Ovary (tissue), 10 donors: ENCODE measurements at regions of chr2 and their contacts with region 1.

Region 1: DNA sequence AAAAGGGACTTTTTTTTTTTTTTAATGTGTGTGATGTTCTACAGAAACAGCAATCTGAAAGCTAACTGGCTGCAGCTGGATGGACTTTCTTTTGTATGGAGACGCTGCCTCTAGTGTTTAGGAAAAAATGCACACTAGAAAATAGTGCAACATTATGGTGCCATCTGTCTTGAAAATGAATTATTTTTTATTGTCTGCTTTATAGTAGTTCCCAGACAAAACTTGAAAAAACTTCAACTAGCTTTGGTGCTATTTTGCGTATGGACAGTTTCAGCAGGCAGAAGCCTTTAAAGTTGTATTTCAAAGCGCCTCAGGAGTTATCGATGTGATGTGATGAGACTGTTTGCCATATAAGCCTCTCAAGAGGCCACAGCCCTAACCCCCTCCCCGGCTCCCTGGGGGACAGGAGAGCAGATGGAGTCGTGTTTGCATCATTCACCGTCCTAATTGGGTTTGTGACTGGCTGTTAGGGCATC is 86.9 kb downstream of the LTBP1 start:
- DNase-seq: no peak
- H3K4me3 ChIP-seq: peak overlapping the region; percentile 34
- H3K27ac ChIP-seq: no peak overlapping the region
- H3K4me1 ChIP-seq: no peaks in the 10 kb centered on the region
- H3K27me3 ChIP-seq: no peaks in the 10 kb centered on the region
- CTCF ChIP-seq: peak in 2 of 3 donors; percentile 37 to 39
- EP300 ChIP-seq: no peak
- POLR2A ChIP-seq: no peak

Region 2: DNA sequence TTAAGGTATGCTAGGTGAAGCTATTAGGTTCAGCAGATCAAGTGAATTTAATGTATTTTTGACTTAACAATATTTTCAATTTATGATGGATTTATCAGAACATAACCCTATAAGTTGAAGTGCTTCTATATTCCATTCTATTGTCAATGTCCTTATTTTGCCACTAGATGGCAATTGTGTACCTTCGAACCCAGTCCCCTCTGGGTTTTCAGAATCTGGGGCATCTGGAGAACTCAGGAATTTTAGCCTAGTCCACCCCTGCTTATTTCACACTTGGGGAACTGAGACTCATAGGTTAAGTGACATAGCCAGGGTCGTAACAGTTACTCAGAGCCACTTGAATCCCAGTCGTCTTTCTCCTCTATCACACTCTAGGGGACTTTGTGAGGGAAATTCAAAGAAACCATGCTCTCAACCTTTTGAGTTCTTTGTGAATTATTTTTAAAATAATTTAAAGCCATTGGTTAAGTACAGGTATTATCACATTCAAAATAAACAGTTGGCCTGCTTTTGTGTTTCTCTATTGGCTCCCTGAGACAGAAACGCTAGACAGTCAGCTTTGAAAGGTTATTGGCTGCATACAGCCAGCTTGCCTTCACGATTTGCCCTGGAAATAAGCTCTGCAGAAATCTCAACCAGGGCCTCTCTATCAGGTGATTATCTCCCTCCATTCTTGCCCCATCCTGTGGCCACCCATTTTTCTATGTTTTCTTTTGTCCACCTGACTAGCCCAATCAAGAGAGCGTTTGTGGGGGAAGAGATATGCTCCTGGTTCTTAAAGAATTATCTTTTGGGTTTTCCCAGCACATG is 260.8 kb before region 1 on chr2:
- intact Hi-C with region 1: loop called in 1 of 4 experiments (anchors 5 kb)
- DNase-seq: no peak
- H3K4me3 ChIP-seq: no peak overlapping the region
- H3K27ac ChIP-seq: no peak overlapping the region
- H3K4me1 ChIP-seq: no peaks in the 10 kb centered on the region
- H3K27me3 ChIP-seq: no peaks in the 10 kb centered on the region
- CTCF ChIP-seq: peak in 2 of 3 donors; percentile 18 to 47
- EP300 ChIP-seq: no peak
- POLR2A ChIP-seq: no peak

Region 3: GRCh38 chr2:33372940-33373553 is 339.4 kb after region 1 on chr2:
- intact Hi-C with region 1: loop called (anchors 5 to 10 kb)
- DNase-seq: peak in 1 of 5 donors; percentile 37
- H3K4me3 ChIP-seq: no peak overlapping the region
- H3K27ac ChIP-seq: no peak overlapping the region
- H3K4me1 ChIP-seq: peaks cover 1% of the 10 kb centered on the region
- H3K27me3 ChIP-seq: no peaks in the 10 kb centered on the region
- CTCF ChIP-seq: peak; percentile 46 to 81 (median 76)
- EP300 ChIP-seq: no peak
- POLR2A ChIP-seq: no peak

Region 4: DNA sequence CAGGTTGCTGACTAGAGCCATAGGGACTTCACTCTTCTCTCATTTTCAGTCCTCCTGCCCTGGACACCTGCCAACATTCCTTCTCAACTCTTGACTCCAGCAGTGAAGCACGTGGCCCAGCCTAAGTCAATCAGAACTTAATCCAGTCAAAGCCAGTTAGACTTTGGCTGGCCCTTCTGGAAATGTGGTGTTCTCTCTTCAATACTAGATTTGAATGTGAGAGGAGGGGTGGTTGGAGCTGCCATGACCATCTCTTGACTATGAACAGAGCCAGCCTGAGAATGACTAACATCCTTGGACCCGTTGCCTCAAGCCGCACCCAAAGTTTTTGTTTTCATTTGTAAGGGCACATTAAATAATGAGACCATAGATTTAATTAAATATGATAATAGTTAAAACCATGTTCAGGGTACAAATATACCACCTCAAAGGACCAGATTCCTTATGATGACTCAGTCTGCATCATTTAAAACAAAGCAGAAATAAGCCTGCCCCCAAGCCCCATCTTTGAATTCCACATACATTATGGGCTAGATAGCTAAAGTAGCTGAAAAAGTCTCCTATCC is 393.1 kb after region 1 on chr2:
- intact Hi-C with region 1: no loop called
- DNase-seq: no peak
- H3K4me3 ChIP-seq: no peak overlapping the region
- H3K27ac ChIP-seq: no peak overlapping the region
- H3K4me1 ChIP-seq: no peaks in the 10 kb centered on the region
- H3K27me3 ChIP-seq: no peaks in the 10 kb centered on the region
- CTCF ChIP-seq: no peak
- EP300 ChIP-seq: no peak
- POLR2A ChIP-seq: no peak

Region 5: DNA sequence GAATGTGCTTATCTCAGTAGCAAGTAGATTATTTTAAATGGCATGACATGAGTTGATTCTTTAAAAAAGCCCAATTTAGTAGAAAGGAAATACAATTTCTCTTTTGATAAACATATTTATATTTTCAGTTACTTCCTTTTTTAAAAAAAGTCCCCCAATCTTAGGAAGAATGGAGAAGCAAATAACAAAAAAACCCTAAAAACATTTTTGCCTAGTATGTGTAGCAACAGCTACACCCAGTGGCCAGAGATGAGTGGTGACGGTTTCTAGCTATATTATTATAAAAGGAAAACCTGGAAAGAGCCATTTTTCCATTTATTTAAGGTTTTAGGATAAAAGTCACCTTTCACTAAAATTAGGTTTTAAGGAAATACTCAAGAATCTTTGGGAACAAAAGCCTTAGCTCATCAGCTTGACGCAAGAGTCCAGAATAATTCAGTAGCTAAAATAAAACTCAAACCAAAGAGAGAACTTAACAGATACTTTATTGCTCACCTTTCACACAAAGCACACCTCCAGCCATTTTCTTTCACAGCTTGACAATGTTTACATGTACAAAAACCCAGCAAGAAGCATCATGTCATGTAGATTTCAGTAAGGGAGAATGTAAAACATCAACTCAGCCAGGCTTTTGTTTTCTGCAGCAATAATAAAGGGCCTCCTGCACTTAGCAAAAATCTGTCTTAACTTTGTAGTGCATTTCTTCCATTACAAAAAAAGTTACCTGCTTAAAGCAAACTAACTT is 549.7 kb after region 1 on chr2:
- intact Hi-C with region 1: loop called in 1 of 4 experiments (anchors 10 kb)
- DNase-seq: peak in 1 of 5 donors; percentile 23
- H3K4me3 ChIP-seq: no peak overlapping the region
- H3K27ac ChIP-seq: no peak overlapping the region
- H3K4me1 ChIP-seq: peaks cover 2% of the 10 kb centered on the region
- H3K27me3 ChIP-seq: no peaks in the 10 kb centered on the region
- CTCF ChIP-seq: peak; percentile 68 to 74 (median 68)
- EP300 ChIP-seq: no peak
- POLR2A ChIP-seq: no peak